Endothelial cell of umbilical vein (primary cell): ENCODE measurements at regions of chr12 and their contacts with region 1.

Region 1: GRCh38 chr12:11171145-11171968 is at the start of gene SMIM10L1:
- DNase-seq: peak; percentile 95
- H3K4me3 ChIP-seq: peak within 1 kb of the TSS; percentile 75 to 100 (median 100)
- H3K27ac ChIP-seq: peak within 1 kb of the TSS; percentile 96
- H3K4me1 ChIP-seq: peaks cover 24% of the 10 kb centered on the region
- H3K27me3 ChIP-seq: no peaks in the 10 kb centered on the region
- CTCF ChIP-seq: peak in 1 of 2 donors; percentile 18
- POLR2A ChIP-seq: peak; percentile 93
- total RNA-seq, gene SMIM10L1: 10.8 and 10.9 TPM in 2 replicates

Region 2: DNA sequence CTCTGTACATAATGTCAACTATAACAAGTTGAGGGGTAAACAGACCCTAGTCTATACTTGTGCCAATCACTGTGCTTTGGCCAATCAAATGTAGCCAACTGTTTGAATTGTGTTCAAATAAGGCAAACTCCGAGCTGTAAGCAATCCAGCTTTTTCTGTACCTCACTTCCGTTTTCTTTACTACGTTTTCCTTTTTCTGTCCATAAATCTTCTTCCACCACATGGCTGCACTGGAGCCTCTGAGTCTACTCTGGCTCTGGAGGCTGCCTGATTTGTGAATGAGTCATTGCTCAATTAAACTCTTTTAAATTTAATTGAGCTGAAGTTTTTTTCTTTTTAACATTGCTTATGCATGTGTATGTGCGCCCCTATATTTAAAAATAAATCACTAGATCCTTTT is 1102.3 kb before region 1 on chr12:
- CTCF ChIA-PET with region 1: no interaction called
- POLR2A ChIA-PET with region 1: no interaction called
- dilution Hi-C with region 1: no loop called
- intact Hi-C with region 1: loop called (anchors 10 kb)
- DNase-seq: peak; percentile 94
- H3K4me3 ChIP-seq: no peak overlapping the region
- H3K27ac ChIP-seq: peak overlapping the region; percentile 98
- H3K4me1 ChIP-seq: peaks cover 44% of the 10 kb centered on the region
- H3K27me3 ChIP-seq: no peaks in the 10 kb centered on the region
- CTCF ChIP-seq: no peak
- POLR2A ChIP-seq: peak; percentile 25

Region 3: GRCh38 chr12:10721651-10722501 is 449.5 kb before region 1 on chr12:
- CTCF ChIA-PET with region 1: no interaction called
- POLR2A ChIA-PET with region 1: no interaction called
- dilution Hi-C with region 1: no loop called
- intact Hi-C with region 1: loop called (anchors 5 kb)
- DNase-seq: peak; percentile 100
- H3K4me3 ChIP-seq: peak overlapping the region; percentile 87 to 92 (median 88)
- H3K27ac ChIP-seq: peak overlapping the region; percentile 98
- H3K4me1 ChIP-seq: peaks cover 57% of the 10 kb centered on the region
- H3K27me3 ChIP-seq: no peaks in the 10 kb centered on the region
- CTCF ChIP-seq: no peak
- POLR2A ChIP-seq: peak; percentile 39

Region 4: GRCh38 chr12:10968765-10969456 is 202.4 kb before region 1 on chr12:
- CTCF ChIA-PET with region 1: no interaction called
- POLR2A ChIA-PET with region 1: no interaction called
- dilution Hi-C with region 1: no loop called
- intact Hi-C with region 1: loop called (anchors 10 kb)
- DNase-seq: peak; percentile 81
- H3K4me3 ChIP-seq: no peak overlapping the region
- H3K27ac ChIP-seq: peak overlapping the region; percentile 35
- H3K4me1 ChIP-seq: peaks cover 21% of the 10 kb centered on the region
- H3K27me3 ChIP-seq: no peaks in the 10 kb centered on the region
- CTCF ChIP-seq: no peak
- POLR2A ChIP-seq: no peak

Region 5: DNA sequence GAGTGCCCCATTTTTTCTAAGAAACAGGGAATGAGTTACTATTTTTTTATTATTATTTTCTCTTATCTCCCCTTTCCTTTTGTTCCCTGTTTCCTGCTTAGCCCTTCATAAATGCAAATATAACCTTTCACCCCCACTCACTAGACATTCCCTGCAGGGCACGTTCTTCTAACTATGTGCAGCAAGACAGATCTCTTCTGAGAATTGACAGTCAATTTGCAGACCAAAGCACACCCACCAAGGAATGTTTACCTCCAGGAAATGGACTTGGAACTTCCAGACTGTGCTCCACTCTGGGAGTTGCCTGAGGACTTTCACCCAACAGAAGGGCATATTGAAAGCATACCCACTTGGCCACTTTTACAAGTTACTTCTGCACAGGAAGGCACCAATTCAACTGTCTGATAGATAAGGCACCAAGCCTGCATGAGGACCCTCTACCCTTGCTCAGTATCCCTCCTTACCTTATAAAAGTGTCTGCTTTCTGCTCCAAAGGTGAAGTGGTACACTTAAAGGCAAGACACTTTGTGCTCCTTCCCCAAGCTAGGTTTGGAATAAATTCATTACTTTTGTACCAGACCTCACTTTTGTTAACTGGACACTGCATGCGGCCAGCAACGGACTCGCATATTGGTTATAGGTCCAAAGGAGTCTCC is 155.5 kb before region 1 on chr12:
- CTCF ChIA-PET with region 1: no interaction called
- POLR2A ChIA-PET with region 1: no interaction called
- dilution Hi-C with region 1: no loop called
- intact Hi-C with region 1: loop called (anchors 5 kb)
- DNase-seq: peak; percentile 86
- H3K4me3 ChIP-seq: no peak overlapping the region
- H3K27ac ChIP-seq: no peak overlapping the region
- H3K4me1 ChIP-seq: peaks cover 13% of the 10 kb centered on the region
- H3K27me3 ChIP-seq: no peaks in the 10 kb centered on the region
- CTCF ChIP-seq: no peak
- POLR2A ChIP-seq: no peak

Region 6: GRCh38 chr12:11202811-11203210 is 31.5 kb after region 1 on chr12:
- CTCF ChIA-PET with region 1: interaction called, 14 read pairs
- POLR2A ChIA-PET with region 1: no interaction called
- dilution Hi-C with region 1: no loop called
- intact Hi-C with region 1: no loop called
- DNase-seq: no peak
- H3K4me3 ChIP-seq: no peak overlapping the region
- H3K27ac ChIP-seq: no peak overlapping the region
- H3K4me1 ChIP-seq: no peaks in the 10 kb centered on the region
- H3K27me3 ChIP-seq: no peaks in the 10 kb centered on the region
- CTCF ChIP-seq: no peak
- POLR2A ChIP-seq: no peak